ENCODE measurements at regions of chr1 and their contacts with region 1.

Region 1: DNA sequence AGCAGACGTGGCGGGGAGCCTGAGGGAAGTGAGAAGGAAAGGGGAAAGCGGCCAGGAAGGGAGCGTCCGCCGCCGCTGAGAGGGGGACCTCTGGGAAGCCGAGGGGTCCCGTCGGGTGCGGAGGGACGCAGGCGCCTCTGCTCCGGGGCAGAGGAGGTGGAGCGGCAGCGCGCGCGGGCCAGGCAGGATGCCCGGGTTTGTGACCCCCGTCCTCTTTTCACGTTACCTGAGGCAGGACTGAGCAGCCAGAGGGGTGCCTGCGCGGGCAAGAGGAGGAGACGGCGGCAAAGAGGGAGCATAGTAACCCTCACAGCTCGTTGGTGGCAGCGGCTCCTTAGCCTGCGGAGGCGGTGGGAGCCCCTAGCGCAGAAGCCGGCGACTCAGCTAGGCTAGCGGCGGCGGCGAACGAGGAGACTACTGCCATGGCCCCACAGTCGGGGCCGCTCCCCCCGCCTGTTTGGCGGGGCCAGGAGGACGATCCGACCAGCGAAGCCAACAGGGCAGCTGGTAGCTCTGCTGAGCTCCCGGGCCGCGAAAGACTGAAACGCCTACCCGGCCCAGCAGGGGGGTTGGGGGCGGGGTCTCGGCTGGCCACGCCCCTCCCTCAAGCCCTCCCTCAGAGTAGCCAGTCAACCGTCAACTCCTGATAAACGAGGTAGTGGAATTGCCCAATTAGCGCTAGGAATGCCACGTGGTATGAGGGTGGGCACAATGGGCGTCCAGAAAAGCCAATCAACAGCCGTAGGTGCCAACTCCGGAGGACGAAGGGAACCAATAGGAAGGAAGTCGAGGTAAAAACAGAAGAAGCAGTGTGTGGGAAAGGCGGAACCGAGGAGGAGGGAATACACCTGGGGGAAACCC is at the start of gene TESK2:
- DNase-seq: peak; percentile 97
- ATAC-seq: peak; percentile 94
- H3K4me3 Mint-ChIP-seq: no peak within 1 kb of the TSS
- H3K27ac Mint-ChIP-seq: no peak within 1 kb of the TSS
- H3K4me1 Mint-ChIP-seq: peaks cover 4% of the 10 kb centered on the region
- H3K27me3 Mint-ChIP-seq: no peaks in the 10 kb centered on the region
- total RNA-seq, gene TESK2: 3.1 to 3.3 TPM

Region 2: DNA sequence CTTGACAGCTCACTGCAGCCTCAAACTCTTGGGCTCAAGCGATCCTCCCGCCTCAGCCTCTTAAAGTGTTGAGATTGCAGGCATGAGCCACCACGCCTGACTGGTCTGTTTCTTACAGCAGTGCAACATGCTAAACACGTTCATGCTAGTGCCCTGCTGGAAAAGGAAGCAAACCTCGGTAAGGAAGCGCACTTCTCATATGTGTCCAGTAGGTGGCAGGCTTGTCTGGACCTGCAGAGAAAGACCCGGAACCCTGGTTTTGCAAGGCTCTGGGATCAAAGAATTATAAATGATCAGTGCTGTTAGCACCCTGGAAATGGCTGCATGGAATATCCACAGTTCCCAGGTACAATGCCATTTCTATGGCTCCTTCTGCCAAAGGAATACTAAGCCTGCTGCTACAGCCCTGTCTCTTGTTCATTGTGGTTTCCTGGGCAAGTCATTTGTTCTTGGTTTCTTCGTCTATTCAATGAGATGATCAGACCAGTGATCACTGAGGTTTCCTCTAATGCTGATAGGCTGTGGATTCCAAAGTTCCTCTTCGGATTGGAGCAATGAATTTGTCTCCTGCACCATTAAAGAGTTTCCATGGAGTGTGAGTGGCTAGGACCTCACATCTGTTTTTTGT is 775.8 kb before region 1 on chr1:
- CTCF ChIA-PET with region 1: no interaction called
- POLR2A ChIA-PET with region 1: no interaction called
- intact Hi-C with region 1: loop called in 1 of 2 experiments (anchors 2 kb)
- DNase-seq: peak; percentile 79
- ATAC-seq: peak; percentile 81
- H3K4me3 Mint-ChIP-seq: peak overlapping the region; percentile 16
- H3K27ac Mint-ChIP-seq: peak overlapping the region; percentile 67
- H3K4me1 Mint-ChIP-seq: peaks cover 48% of the 10 kb centered on the region
- H3K27me3 Mint-ChIP-seq: no peaks in the 10 kb centered on the region

Region 3: DNA sequence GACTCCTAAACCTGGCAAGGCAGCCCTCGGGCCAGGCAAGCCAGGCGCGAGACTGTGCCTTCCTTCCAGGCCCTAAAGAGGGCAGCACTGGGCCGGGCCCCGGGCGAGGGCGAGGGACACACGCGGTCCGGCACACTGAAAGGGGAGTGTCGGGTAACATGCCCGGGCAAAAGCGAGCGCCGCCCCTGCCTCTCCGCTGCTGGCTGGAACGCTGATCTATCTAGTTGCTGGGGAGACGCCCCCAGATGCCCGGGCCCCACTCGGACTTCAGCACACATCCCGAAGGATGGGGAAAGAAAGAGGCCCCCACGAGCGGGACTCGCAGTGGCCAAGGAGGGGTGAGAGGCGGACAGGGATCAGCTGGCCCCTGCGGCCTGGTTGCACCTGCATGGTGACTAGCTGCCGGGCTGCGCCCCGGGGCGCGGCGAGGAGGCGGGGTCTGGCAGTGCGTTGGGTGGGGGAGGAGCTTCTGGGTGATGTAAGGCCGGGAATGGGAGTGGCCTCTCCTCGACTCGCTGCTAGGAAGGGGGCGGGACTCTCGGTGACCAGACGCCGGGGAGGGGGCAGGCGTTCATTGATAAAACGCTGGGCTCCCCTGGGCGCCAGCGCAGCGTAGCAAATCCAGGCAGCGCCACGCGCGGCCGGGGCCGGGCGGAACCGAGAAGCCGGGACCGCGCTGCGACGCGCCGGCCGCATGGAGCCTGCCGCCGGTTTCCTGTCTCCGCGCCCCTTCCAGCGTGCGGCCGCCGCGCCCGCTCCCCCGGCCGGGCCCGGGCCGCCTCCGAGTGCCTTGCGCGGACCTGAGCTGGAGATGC is 690.9 kb before region 1 on chr1 and contains the start of gene PLK3:
- CTCF ChIA-PET with region 1: no interaction called
- POLR2A ChIA-PET with region 1: no interaction called
- intact Hi-C with region 1: loop called in 1 of 2 experiments (anchors 10 kb)
- DNase-seq: peak; percentile 99
- ATAC-seq: peak; percentile 84
- H3K4me3 Mint-ChIP-seq: peak within 1 kb of the TSS; percentile 87
- H3K27ac Mint-ChIP-seq: peak within 1 kb of the TSS; percentile 100
- H3K4me1 Mint-ChIP-seq: peaks cover 41% of the 10 kb centered on the region
- H3K27me3 Mint-ChIP-seq: no peaks in the 10 kb centered on the region
- total RNA-seq, gene PLK3: 52.1 to 52.7 TPM

Region 4: GRCh38 chr1:44985747-44986359 is 505.0 kb before region 1 on chr1:
- CTCF ChIA-PET with region 1: no interaction called
- POLR2A ChIA-PET with region 1: no interaction called
- intact Hi-C with region 1: loop called in 1 of 2 experiments (anchors 1 kb)
- DNase-seq: no peak
- ATAC-seq: no peak
- H3K4me3 Mint-ChIP-seq: peak overlapping the region; percentile 96
- H3K27ac Mint-ChIP-seq: peak overlapping the region; percentile 87
- H3K4me1 Mint-ChIP-seq: peaks cover 22% of the 10 kb centered on the region
- H3K27me3 Mint-ChIP-seq: no peaks in the 10 kb centered on the region

Region 5: DNA sequence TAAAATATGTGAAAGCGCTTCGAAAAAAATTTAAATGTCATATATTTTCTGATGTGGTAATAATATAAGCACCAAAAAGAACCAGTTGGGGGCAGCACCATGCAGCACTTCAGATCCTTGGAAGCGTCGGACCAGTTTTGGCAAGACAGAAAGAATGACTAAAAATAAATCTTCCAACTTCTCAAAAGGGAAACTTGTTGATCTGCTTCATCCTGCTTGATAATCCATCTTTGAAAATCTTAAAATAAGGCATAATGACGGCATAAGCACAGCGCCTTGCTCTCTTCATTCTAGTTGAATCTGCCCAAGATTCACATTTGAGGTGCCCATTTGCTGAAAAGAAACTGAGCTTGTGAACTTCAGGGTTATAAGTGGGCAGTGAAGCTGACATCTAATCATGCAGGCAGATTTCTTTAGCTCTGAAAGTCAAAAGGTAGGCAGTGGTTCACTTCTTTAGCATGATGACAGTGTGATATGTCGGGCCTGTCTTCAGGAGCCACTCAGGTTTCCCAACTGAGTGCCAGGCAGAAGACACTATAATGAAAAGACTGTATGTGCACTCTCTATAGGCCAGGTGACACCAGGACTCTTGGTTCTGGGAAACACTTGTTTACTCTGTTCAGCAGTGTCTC is 130.9 kb before region 1 on chr1:
- CTCF ChIA-PET with region 1: interaction called, 170 read pairs
- POLR2A ChIA-PET with region 1: interaction called, 4 read pairs
- intact Hi-C with region 1: loop called (anchors 1 kb)
- DNase-seq: peak; percentile 76
- ATAC-seq: peak; percentile 79
- H3K4me3 Mint-ChIP-seq: no peak overlapping the region
- H3K27ac Mint-ChIP-seq: peak overlapping the region; percentile 4
- H3K4me1 Mint-ChIP-seq: peaks cover 11% of the 10 kb centered on the region
- H3K27me3 Mint-ChIP-seq: no peaks in the 10 kb centered on the region

Region 6: GRCh38 chr1:45437323-45437722 is 53.5 kb before region 1 on chr1:
- CTCF ChIA-PET with region 1: no interaction called
- POLR2A ChIA-PET with region 1: no interaction called
- intact Hi-C with region 1: no loop called
- DNase-seq: no peak
- ATAC-seq: no peak
- H3K4me3 Mint-ChIP-seq: no peak overlapping the region
- H3K27ac Mint-ChIP-seq: no peak overlapping the region
- H3K4me1 Mint-ChIP-seq: peaks cover 4% of the 10 kb centered on the region
- H3K27me3 Mint-ChIP-seq: no peaks in the 10 kb centered on the region

Region 7: DNA sequence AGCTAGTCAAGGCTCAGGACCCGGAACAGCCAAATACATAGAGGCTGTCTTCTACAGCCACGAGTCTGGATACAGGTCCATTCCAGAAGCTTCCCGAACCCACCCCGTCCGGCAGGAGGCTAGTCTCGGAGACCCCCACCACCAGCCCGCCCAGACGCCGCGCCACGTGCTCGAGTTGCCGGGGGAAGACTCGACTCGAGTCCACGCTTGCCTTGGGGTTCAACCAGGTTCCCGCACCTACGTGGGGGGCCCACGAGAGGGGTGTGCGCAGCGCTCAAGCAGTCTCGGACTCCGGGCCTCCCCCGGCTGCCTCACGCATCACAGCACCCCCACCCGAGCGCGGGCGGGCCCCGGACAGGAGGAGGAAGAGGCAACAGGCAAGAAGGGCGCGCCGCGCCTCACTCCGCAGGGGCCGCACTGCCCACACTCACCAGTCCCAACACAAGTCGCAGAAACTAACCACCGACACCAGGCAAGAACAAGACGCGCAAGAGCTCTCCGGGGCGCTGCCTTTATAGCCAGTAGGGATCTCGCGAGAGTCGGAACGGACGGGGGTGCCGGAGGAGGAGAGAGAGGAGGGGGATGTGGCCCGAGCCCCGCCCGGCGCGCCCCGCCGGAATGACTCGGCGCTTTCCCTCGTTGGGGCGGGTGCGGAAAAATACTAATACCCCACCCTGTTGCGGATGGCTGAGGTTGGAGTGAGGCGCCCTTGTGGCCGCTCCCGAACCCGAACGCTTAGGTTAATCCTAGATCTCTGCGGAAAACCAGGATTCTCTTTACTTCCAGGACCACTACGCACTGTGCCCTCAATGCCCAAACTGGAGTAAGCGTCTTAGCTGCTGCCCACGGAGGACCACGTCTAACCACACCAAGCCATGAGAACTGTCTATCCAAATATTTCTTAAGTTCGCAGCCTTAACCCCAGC is 30.8 kb after region 1 on chr1 and contains the start of gene PRDX1:
- CTCF ChIA-PET with region 1: interaction called, 10 read pairs
- POLR2A ChIA-PET with region 1: interaction called, 16 read pairs
- intact Hi-C with region 1: loop called in 1 of 2 experiments (anchors 1 kb)
- DNase-seq: peak; percentile 98
- ATAC-seq: peak; percentile 89
- H3K4me3 Mint-ChIP-seq: peak within 1 kb of the TSS; percentile 96
- H3K27ac Mint-ChIP-seq: peak within 1 kb of the TSS; percentile 94
- H3K4me1 Mint-ChIP-seq: peaks cover 47% of the 10 kb centered on the region
- H3K27me3 Mint-ChIP-seq: peaks cover 4% of the 10 kb centered on the region
- total RNA-seq, gene PRDX1: 473 to 580 TPM

Region 8: GRCh38 chr1:45535988-45536766 is 45.3 kb after region 1 on chr1:
- CTCF ChIA-PET with region 1: no interaction called
- POLR2A ChIA-PET with region 1: no interaction called
- intact Hi-C with region 1: no loop called
- DNase-seq: no peak
- ATAC-seq: peak; percentile 93
- H3K4me3 Mint-ChIP-seq: no peak overlapping the region
- H3K27ac Mint-ChIP-seq: no peak overlapping the region
- H3K4me1 Mint-ChIP-seq: peaks cover 15% of the 10 kb centered on the region
- H3K27me3 Mint-ChIP-seq: no peaks in the 10 kb centered on the region

Region 9: DNA sequence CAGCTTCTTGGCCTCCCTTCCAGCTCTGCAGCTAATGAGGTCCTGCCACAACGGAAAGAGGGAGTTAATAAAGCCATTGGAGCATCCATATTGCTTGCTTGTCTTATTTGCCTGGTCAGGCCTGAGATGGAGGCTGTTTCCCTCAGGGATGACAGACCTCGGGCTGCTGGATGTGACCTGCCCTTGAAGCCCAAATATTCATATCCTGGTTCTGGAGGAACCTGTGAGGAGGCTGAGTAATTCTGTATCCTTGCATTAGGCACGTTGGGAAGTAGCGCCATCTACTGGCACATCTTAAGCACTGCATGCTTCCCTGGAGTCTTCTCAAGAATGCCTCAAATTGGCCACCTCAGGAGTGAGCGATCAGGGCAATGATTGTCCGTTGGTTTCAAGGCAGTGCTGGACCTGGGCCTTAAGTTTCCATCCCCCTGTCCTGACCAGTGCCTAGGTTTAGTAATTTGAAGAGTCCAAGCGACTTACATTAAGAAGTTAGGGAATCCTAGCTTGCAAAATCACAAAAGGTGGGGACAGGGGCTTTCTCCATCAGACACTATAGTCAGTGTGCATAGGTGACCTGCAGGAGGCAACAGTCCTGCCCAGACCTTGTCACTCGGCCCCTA is 79.2 kb after region 1 on chr1:
- CTCF ChIA-PET with region 1: interaction called, 8 read pairs
- POLR2A ChIA-PET with region 1: no interaction called
- intact Hi-C with region 1: loop called in 1 of 2 experiments (anchors 1 kb)
- DNase-seq: peak; percentile 82
- ATAC-seq: peak; percentile 99
- H3K4me3 Mint-ChIP-seq: no peak overlapping the region
- H3K27ac Mint-ChIP-seq: no peak overlapping the region
- H3K4me1 Mint-ChIP-seq: no peaks in the 10 kb centered on the region
- H3K27me3 Mint-ChIP-seq: no peaks in the 10 kb centered on the region

Measured in activated CD4-positive, alpha-beta T cell treated with anti-CD3 and anti-CD28 coated beads for 36 hours (primary cell).